ENCODE measurements at regions of chr2 and their contacts with region 1.

Region 1: GRCh38 chr2:170739048-170739447 is 23.9 kb downstream of the SP5 start:
- DNase-seq: peak; percentile 85
- H3K4me3 ChIP-seq: no peak overlapping the region
- CTCF ChIP-seq: no peak

Region 2: GRCh38 chr2:170783551-170783950 is 44.5 kb after region 1 on chr2:
- in situ Hi-C with region 1: loop called (anchors 10 kb)
- DNase-seq: no peak
- H3K4me3 ChIP-seq: no peak overlapping the region
- CTCF ChIP-seq: no peak

Measured in astrocyte of the cerebellum (primary cell).